ENCODE measurements at regions of chr20 and their contacts with region 1.

Region 1: DNA sequence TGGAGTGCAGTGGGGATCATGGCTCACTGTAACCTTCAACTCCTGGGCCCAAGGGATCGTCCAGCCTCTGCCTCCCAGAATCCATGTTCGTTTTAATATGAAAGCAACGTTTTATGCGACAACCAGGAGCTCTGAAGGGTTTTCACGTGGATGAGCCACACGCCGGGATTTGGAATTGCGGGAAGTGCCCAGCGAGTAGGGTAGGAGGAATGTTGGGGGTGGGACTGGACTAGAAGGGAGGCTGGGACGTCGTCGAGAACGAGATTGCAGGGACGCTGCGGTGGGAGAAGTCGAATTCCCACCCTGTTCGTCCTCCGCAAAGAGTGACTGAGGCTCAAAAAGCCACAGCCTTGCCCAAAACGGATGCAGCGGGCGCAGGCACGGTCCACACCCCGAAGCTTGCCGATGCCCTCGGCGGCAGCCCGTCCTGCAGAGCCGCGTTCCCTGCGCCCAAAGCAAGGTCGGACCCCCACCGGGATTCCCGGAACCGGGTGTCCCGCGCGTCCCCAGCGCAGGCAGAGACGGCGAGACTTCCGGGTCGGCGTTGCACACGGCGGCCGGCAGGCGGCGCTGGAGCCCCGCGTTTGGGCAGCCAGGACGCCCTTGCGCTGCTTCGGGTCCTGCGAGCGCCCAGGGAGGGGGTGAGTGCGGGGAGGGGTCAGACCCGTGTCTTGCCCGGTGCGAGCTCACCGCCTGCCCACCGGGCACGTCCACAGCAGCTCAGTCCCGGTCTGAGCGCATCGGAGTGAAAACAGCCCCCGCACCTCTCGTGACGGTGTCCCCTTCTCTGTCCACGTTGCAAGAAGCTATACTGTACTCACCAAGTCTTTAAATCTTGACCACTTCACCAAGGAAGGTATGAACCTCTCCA is 87.8 kb downstream of the DHX35 start:
- DNase-seq: peak; percentile 79
- ATAC-seq: peak; percentile 89
- H3K4me3 Mint-ChIP-seq: peak overlapping the region; percentile 70
- H3K27ac Mint-ChIP-seq: peak overlapping the region; percentile 70
- H3K4me1 Mint-ChIP-seq: peaks cover 9% of the 10 kb centered on the region
- H3K27me3 Mint-ChIP-seq: peaks cover 10% of the 10 kb centered on the region

Region 2: DNA sequence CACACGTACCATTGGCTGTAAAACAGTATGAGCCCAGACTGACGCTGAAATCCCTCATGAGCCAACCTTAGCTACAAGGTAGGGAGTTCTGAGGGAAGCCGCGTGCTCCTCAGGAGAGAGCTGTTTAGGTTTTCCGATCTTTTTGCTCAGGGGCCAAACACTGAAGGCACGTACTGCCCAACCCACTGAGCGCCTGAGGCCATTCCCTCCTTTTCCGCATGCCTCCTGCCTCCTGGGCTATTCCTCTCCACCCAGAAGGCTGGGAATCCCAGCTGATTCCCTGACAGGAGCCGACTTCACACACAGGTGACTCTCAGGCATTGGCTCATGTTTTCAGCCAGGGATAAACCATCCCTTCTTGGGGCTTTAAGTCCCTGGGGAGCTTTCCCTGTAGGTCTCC is 129.1 kb before region 1 on chr20:
- CTCF ChIA-PET with region 1: interaction called, 40 read pairs
- POLR2A ChIA-PET with region 1: no interaction called
- DNase-seq: no peak
- ATAC-seq: no peak
- H3K4me3 Mint-ChIP-seq: no peak overlapping the region
- H3K27ac Mint-ChIP-seq: no peak overlapping the region
- H3K4me1 Mint-ChIP-seq: peaks cover 4% of the 10 kb centered on the region
- H3K27me3 Mint-ChIP-seq: no peaks in the 10 kb centered on the region

Region 3: DNA sequence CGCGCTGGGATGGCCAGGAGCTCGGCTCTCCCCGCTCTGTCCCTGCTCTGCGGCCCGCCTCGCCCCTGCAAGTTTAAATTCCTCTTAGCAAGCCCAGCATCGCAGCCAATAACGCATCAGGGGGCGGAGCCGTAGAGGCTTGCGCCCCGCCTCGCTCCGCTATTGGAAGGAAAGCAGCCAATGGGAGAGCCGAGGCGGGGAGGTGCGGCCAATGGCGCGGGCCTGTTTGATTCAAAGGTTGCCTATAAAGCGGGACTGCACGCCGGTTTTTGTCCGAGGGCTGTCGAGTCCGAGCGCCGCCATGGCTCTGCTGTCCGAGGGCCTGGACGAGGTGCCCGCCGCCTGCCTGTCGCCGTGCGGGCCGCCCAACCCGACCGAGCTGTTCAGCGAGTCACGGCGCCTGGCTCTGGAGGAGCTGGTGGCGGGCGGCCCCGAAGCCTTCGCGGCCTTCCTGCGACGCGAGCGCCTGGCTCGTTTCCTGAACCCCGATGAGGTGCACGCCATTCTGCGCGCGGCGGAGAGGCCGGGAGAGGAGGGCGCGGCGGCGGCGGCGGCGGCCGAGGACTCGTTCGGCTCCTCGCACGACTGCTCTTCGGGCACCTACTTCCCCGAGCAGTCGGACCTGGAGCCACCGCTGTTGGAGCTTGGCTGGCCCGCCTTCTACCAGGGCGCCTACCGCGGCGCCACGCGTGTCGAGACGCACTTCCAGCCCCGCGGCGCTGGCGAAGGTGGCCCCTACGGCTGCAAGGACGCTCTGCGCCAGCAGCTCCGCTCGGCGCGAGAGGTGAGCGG is 123.6 kb before region 1 on chr20 and contains the start of gene FAM83D:
- CTCF ChIA-PET with region 1: interaction called, 40 read pairs
- POLR2A ChIA-PET with region 1: interaction called, 4 read pairs
- DNase-seq: peak; percentile 98
- ATAC-seq: peak; percentile 95
- H3K4me3 Mint-ChIP-seq: peak within 1 kb of the TSS; percentile 91
- H3K27ac Mint-ChIP-seq: peak within 1 kb of the TSS; percentile 84
- H3K4me1 Mint-ChIP-seq: peaks cover 38% of the 10 kb centered on the region
- H3K27me3 Mint-ChIP-seq: no peaks in the 10 kb centered on the region
- total RNA-seq, gene FAM83D: 24.9 to 25.6 TPM

Region 4: GRCh38 chr20:38962044-38962927 is 87.6 kb before region 1 on chr20 and contains the start of gene DHX35:
- CTCF ChIA-PET with region 1: interaction called, 42 read pairs
- POLR2A ChIA-PET with region 1: interaction called, 9 read pairs
- DNase-seq: peak; percentile 99
- ATAC-seq: peak; percentile 100
- H3K4me3 Mint-ChIP-seq: peak within 1 kb of the TSS; percentile 92
- H3K27ac Mint-ChIP-seq: peak within 1 kb of the TSS; percentile 96
- H3K4me1 Mint-ChIP-seq: peaks cover 28% of the 10 kb centered on the region
- H3K27me3 Mint-ChIP-seq: no peaks in the 10 kb centered on the region
- total RNA-seq, gene DHX35: 10.8 to 11.1 TPM

Region 5: GRCh38 chr20:39029324-39029820 is 20.5 kb before region 1 on chr20:
- CTCF ChIA-PET with region 1: interaction called, 13 read pairs
- POLR2A ChIA-PET with region 1: no interaction called
- DNase-seq: no peak
- ATAC-seq: no peak
- H3K4me3 Mint-ChIP-seq: no peak overlapping the region
- H3K27ac Mint-ChIP-seq: no peak overlapping the region
- H3K4me1 Mint-ChIP-seq: peaks cover 23% of the 10 kb centered on the region
- H3K27me3 Mint-ChIP-seq: no peaks in the 10 kb centered on the region

Region 6: GRCh38 chr20:39036011-39036410 is 13.9 kb before region 1 on chr20:
- CTCF ChIA-PET with region 1: interaction called, 48 read pairs
- POLR2A ChIA-PET with region 1: interaction called, 3 read pairs
- DNase-seq: no peak
- ATAC-seq: no peak
- H3K4me3 Mint-ChIP-seq: no peak overlapping the region
- H3K27ac Mint-ChIP-seq: no peak overlapping the region
- H3K4me1 Mint-ChIP-seq: peaks cover 4% of the 10 kb centered on the region
- H3K27me3 Mint-ChIP-seq: no peaks in the 10 kb centered on the region

Region 7: GRCh38 chr20:39081255-39081654 is 31.3 kb after region 1 on chr20:
- CTCF ChIA-PET with region 1: interaction called, 160 read pairs
- POLR2A ChIA-PET with region 1: interaction called, 3 read pairs
- DNase-seq: peak; percentile 85
- ATAC-seq: peak; percentile 72
- H3K4me3 Mint-ChIP-seq: no peak overlapping the region
- H3K27ac Mint-ChIP-seq: no peak overlapping the region
- H3K4me1 Mint-ChIP-seq: peaks cover 7% of the 10 kb centered on the region
- H3K27me3 Mint-ChIP-seq: peaks cover 30% of the 10 kb centered on the region

Region 8: DNA sequence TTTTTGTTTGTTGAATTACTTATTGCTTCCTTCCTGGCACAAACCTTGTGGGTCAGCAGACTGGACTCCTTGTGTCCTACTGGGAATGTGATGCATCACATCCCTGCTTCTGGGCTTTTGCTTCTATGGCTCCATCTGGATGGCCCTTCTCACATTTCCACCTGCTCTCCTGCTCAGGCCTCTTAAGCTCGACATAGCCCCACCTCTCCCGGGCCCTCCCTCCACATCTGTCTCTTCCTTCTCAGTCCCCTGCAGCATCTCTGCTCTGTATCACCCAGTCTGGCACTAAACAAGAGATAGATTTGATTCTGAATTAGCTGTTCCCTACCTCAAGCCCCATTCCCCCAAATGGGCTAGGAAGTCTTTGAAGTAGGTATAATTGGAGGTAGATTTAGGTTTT is 269.0 kb after region 1 on chr20:
- CTCF ChIA-PET with region 1: no interaction called
- POLR2A ChIA-PET with region 1: no interaction called
- DNase-seq: no peak
- ATAC-seq: no peak
- H3K4me3 Mint-ChIP-seq: no peak overlapping the region
- H3K27ac Mint-ChIP-seq: no peak overlapping the region
- H3K4me1 Mint-ChIP-seq: no peaks in the 10 kb centered on the region
- H3K27me3 Mint-ChIP-seq: peaks cover 5% of the 10 kb centered on the region